Endothelial cell of umbilical vein (primary cell): ENCODE measurements at regions of chr4 and their contacts with region 1.

Region 1: DNA sequence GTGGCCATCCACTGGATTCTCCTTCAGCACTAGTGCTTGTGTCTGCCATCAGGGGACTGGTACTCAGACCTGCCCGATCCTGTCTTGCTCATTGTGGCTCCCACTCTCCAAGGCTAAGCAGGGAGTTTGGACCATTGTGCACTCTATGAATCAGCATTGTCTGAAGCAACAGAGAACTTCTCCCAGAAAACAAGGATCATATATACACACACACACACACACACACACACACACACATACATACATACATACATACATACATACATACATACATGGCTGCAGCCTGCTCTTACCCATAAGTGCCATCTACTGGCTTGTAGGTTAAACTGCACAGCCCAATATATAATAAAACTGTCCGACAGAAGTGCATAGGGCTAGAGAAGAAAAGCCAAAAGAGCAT is 345.3 kb upstream of the LCORL start:
- DNase-seq: peak; percentile 51
- H3K4me3 ChIP-seq: no peak overlapping the region
- H3K27ac ChIP-seq: no peak overlapping the region
- H3K4me1 ChIP-seq: no peaks in the 10 kb centered on the region
- H3K27me3 ChIP-seq: no peaks in the 10 kb centered on the region
- CTCF ChIP-seq: peak; percentile 34 to 52
- POLR2A ChIP-seq: no peak

Region 2: DNA sequence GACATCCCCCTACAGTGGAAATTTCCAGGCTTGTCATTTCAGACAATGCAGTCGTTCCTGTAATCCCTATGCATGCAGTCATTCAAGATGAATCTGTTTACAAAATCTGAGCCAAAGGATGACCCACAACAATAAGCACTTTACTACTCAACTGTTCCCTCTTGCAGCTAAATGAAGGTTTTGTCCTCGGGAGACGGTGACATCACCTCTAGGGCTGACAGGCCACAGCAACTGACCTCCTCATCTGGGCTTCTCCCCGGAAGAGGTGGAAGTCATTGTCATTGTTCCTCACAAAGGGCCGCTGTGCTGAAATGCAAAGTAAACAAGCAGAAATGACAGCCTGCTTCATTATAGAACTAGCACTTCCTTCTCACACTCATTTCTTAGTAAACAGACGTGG is 822.7 kb before region 1 on chr4:
- CTCF ChIA-PET with region 1: interaction called, 3 read pairs
- POLR2A ChIA-PET with region 1: no interaction called
- dilution Hi-C with region 1: no loop called
- intact Hi-C with region 1: loop called (anchors 1 kb)
- DNase-seq: no peak
- H3K4me3 ChIP-seq: no peak overlapping the region
- H3K27ac ChIP-seq: no peak overlapping the region
- H3K4me1 ChIP-seq: peaks cover 4% of the 10 kb centered on the region
- H3K27me3 ChIP-seq: peaks cover 2 to 3% of the 10 kb centered on the region in 2 experiments
- CTCF ChIP-seq: no peak
- POLR2A ChIP-seq: no peak

Region 3: GRCh38 chr4:17817020-17817419 is 549.9 kb before region 1 on chr4:
- CTCF ChIA-PET with region 1: interaction called, 50 read pairs
- POLR2A ChIA-PET with region 1: no interaction called
- dilution Hi-C with region 1: no loop called
- intact Hi-C with region 1: loop called (anchors 1 kb)
- DNase-seq: peak; percentile 75
- H3K4me3 ChIP-seq: no peak overlapping the region
- H3K27ac ChIP-seq: no peak overlapping the region
- H3K4me1 ChIP-seq: peaks cover 23% of the 10 kb centered on the region
- H3K27me3 ChIP-seq: no peaks in the 10 kb centered on the region
- CTCF ChIP-seq: peak; percentile 28 to 33
- POLR2A ChIP-seq: no peak

Region 4: GRCh38 chr4:17934286-17934685 is 432.6 kb before region 1 on chr4:
- CTCF ChIA-PET with region 1: interaction called, 8 read pairs
- POLR2A ChIA-PET with region 1: no interaction called
- dilution Hi-C with region 1: no loop called
- intact Hi-C with region 1: loop called (anchors 1 kb)
- DNase-seq: no peak
- H3K4me3 ChIP-seq: no peak overlapping the region
- H3K27ac ChIP-seq: no peak overlapping the region
- H3K4me1 ChIP-seq: no peaks in the 10 kb centered on the region
- H3K27me3 ChIP-seq: no peaks in the 10 kb centered on the region
- CTCF ChIP-seq: no peak
- POLR2A ChIP-seq: no peak

Region 5: GRCh38 chr4:17945303-17945702 is 421.6 kb before region 1 on chr4:
- CTCF ChIA-PET with region 1: no interaction called
- POLR2A ChIA-PET with region 1: no interaction called
- dilution Hi-C with region 1: no loop called
- intact Hi-C with region 1: no loop called
- DNase-seq: no peak
- H3K4me3 ChIP-seq: no peak overlapping the region
- H3K27ac ChIP-seq: no peak overlapping the region
- H3K4me1 ChIP-seq: peaks cover 17% of the 10 kb centered on the region
- H3K27me3 ChIP-seq: no peaks in the 10 kb centered on the region
- CTCF ChIP-seq: no peak
- POLR2A ChIP-seq: no peak

Region 6: GRCh38 chr4:18075823-18076433 is 291.0 kb before region 1 on chr4:
- CTCF ChIA-PET with region 1: no interaction called
- POLR2A ChIA-PET with region 1: no interaction called
- dilution Hi-C with region 1: no loop called
- intact Hi-C with region 1: loop called (anchors 2 kb)
- DNase-seq: peak; percentile 47
- H3K4me3 ChIP-seq: no peak overlapping the region
- H3K27ac ChIP-seq: no peak overlapping the region
- H3K4me1 ChIP-seq: peaks cover 13% of the 10 kb centered on the region
- H3K27me3 ChIP-seq: peaks cover 4 to 8% of the 10 kb centered on the region in 2 experiments
- CTCF ChIP-seq: peak; percentile 60 to 62
- POLR2A ChIP-seq: no peak

Region 7: DNA sequence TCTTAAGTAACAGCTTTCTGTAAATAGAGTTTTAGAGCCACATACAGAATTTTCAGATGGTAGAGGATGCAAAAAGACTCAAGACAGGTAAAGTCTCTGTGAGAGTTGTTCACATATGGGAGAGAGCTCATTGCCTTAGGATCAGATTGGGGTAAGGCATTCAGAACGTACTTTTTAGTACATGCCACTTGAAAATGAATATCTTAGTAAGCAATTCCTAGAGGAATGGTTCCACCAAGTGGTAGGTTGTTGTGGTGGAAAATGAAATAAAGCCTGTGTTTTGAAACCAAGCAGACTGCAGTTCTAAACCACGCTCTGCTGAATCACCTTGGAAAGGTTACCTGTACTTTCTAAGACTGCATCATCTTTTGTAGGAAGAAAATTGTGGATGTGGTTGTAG is 201.7 kb after region 1 on chr4:
- CTCF ChIA-PET with region 1: interaction called, 16 read pairs
- POLR2A ChIA-PET with region 1: no interaction called
- dilution Hi-C with region 1: no loop called
- intact Hi-C with region 1: loop called (anchors 10 kb)
- DNase-seq: peak; percentile 78
- H3K4me3 ChIP-seq: no peak overlapping the region
- H3K27ac ChIP-seq: no peak overlapping the region
- H3K4me1 ChIP-seq: peaks cover 24% of the 10 kb centered on the region
- H3K27me3 ChIP-seq: no peaks in the 10 kb centered on the region
- CTCF ChIP-seq: peak in 1 of 2 donors; percentile 30
- POLR2A ChIP-seq: no peak